ENCODE measurements at regions of chr2 and their contacts with region 1.

Region 1: DNA sequence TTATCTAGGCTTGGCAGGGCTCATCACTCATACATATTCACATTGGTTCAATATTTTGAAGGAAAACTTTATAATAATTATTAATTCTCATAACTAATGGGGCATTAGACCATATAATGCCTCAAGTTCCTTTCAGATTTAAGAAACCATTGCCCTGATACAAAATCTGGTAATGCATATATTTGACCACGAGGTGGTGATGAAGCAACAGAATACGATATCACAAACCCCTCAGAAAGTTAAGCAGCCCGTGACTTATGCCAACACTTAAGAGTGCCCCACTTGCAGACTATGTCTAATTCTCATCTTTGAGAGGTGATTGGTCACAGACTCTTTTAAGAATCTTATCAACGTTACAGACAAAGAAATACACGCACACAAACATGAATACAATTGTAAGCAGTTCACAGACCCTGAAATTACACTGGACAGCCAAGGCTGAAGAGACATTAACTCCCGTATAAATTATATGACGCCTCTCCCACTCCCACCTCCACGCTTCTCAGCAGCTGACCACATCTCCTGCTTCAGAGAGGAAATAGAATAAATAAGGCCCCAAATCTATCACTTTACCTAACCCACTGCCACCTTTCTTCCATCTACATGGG is 20.7 kb upstream of the DNAH6 start:
- DNase-seq: peak in 3 of 5 donors; percentile 29 to 85 (median 83)
- H3K4me3 ChIP-seq: no peak overlapping the region
- H3K27ac ChIP-seq: no peak overlapping the region
- H3K4me1 ChIP-seq: peaks cover 0 to 9% (median 0%) of the 10 kb centered on the region in 3 donors
- H3K27me3 ChIP-seq: no peaks in the 10 kb centered on the region
- CTCF ChIP-seq: peak; percentile 62

Region 2: DNA sequence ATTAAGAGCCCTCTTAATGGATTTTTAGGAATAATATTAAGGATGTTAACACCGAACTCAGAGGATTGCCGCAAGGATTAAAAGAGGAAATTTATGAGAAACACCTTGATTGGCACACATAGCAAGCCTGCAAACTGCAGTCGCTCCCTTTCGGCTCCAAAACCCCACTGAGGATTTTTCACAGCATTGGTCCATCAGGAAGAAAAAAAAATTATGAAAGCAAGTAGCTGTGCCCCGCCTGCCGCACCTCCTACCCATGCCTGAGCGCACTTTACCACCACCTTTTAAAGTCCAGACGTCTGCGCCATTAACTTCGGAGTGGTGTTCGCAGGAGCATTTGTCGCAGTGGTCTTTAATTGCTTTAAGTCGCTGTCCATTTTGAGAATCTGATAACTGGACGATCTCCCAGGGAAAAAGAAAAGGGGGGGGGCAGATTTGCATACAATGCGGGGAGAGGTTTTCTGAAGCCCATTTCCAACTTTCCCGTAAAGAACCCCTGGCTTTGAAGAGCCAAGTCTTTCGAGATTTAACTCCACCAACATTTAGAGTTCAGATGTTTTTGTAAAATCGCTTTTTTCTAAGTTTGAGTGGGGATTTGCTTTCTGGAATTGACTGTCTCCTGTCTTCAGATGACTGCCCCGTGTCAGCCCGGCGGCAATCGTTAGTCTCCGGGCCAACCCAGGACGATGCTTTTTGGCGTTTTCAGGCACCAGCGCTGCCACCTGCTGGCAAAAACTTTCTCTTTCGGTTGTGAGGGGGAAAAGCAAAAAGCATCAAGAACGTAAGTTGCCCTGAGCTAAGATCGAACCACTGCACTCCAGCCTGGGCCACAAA is 386.2 kb after region 1 on chr2:
- intact Hi-C with region 1: loop called (anchors 10 kb)
- DNase-seq: peak; percentile 80 to 93 (median 89)
- H3K4me3 ChIP-seq: peak overlapping the region; percentile 60 to 67 (median 61)
- H3K27ac ChIP-seq: no peak overlapping the region
- H3K4me1 ChIP-seq: peaks cover 0 to 7% (median 0%) of the 10 kb centered on the region in 3 donors
- H3K27me3 ChIP-seq: peaks cover 18% of the 10 kb centered on the region
- CTCF ChIP-seq: peak; percentile 82